Adrenal gland (tissue), 19 donors: ENCODE measurements at regions of chr1 and their contacts with region 1.

Region 1: GRCh38 chr1:27357281-27358037 is 9.3 kb downstream of the MAP3K6 start:
- DNase-seq: peak; percentile 70 to 89 (median 82)
- H3K4me3 ChIP-seq: peak overlapping the region in 1 of 4 donors; percentile 14
- H3K27ac ChIP-seq: no peak overlapping the region
- H3K4me1 ChIP-seq: peaks cover 0 to 5% of the 10 kb centered on the region in 2 donors
- H3K27me3 ChIP-seq: no peaks in the 10 kb centered on the region
- CTCF ChIP-seq: peak; percentile 92 to 99 (median 98)
- POLR2A ChIP-seq: no peak

Region 2: GRCh38 chr1:27292106-27292505 is 65.4 kb before region 1 on chr1:
- intact Hi-C with region 1: no loop called
- DNase-seq: peak in 2 of 7 donors; percentile 18 to 46
- H3K4me3 ChIP-seq: no peak overlapping the region
- H3K27ac ChIP-seq: no peak overlapping the region
- H3K4me1 ChIP-seq: no peaks in the 10 kb centered on the region
- H3K27me3 ChIP-seq: no peaks in the 10 kb centered on the region
- CTCF ChIP-seq: no peak
- POLR2A ChIP-seq: no peak

Region 3: GRCh38 chr1:27392096-27392777 is 34.8 kb after region 1 on chr1 and contains the start of gene GPR3:
- intact Hi-C with region 1: loop called (anchors 5 kb)
- DNase-seq: peak; percentile 87 to 96 (median 93)
- H3K4me3 ChIP-seq: peak within 1 kb of the TSS in 1 of 4 donors; percentile 60
- H3K27ac ChIP-seq: peak within 1 kb of the TSS in 3 of 5 donors; percentile 14 to 76 (median 57)
- H3K4me1 ChIP-seq: peaks cover 11 to 16% of the 10 kb centered on the region in 2 donors
- H3K27me3 ChIP-seq: no peaks in the 10 kb centered on the region
- CTCF ChIP-seq: peak in 4 of 6 experiments; percentile 24 to 39 (median 36)
- POLR2A ChIP-seq: peak in 1 of 2 donors; percentile 31
- total RNA-seq, gene GPR3: 0.17 to 2.0 (median 0.66) TPM in 4 of 9 donors, not detected in the others